Endothelial cell of umbilical vein (primary cell): ENCODE measurements at regions of chr11 and their contacts with region 1.

Region 1: DNA sequence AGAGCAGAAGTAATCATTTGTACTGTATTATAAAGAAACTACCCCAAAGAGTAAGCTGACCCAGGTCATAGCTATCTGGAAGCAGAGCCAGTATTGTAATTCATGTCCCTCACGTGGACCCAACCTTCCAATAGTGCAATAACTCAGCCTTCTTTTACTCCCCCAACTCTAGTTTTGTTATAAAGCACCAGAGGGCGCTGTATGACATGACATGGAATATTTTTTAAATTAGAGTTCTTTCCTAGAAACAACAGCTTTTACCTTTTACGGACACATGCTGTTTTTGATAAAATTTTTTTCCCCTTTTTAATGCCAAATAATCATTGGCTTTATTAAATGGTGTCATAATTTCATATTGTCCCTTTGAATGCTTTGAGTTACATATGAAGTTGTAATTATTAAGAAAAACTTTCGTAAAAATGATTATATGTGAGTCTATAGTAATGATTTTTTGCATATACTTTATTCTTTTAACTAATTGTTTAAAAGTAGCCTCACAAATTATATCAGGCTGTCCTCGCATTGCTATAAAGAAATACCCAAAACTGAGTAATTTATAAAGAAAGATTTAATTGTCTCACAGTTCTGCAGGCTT is 76.9 kb downstream of the DKK3 start:
- DNase-seq: peak; percentile 79
- H3K4me3 ChIP-seq: no peak overlapping the region
- H3K27ac ChIP-seq: no peak overlapping the region
- H3K4me1 ChIP-seq: peaks cover 6% of the 10 kb centered on the region
- H3K27me3 ChIP-seq: no peaks in the 10 kb centered on the region
- CTCF ChIP-seq: peak; percentile 32 to 51
- POLR2A ChIP-seq: no peak

Region 2: DNA sequence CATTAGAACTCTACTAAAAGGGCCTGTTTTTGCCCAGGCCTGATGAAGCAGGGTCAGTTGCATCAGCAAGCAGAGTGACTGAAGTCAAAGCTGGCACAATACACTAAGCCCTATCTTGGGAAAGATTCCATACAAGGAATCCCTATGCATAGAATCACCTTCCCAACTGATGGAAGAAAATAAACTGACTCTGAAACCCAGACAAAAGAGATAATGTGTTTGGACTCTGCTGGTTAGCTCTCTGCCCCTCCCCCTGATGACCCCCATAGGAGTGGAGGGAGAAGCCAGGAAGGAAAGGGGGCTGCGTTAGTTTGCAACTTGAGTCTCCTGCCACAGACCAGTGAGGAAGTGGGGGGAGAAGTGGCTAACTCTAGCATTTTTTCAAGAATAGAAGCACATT is 342.7 kb before region 1 on chr11:
- CTCF ChIA-PET with region 1: no interaction called
- POLR2A ChIA-PET with region 1: no interaction called
- dilution Hi-C with region 1: no loop called
- intact Hi-C with region 1: no loop called
- DNase-seq: no peak
- H3K4me3 ChIP-seq: no peak overlapping the region
- H3K27ac ChIP-seq: no peak overlapping the region
- H3K4me1 ChIP-seq: no peaks in the 10 kb centered on the region
- H3K27me3 ChIP-seq: peaks cover 0 to 2% of the 10 kb centered on the region in 2 experiments
- CTCF ChIP-seq: no peak
- POLR2A ChIP-seq: no peak

Region 3: GRCh38 chr11:11916981-11917399 is 14.6 kb before region 1 on chr11:
- CTCF ChIA-PET with region 1: interaction called, 12 read pairs
- POLR2A ChIA-PET with region 1: no interaction called
- dilution Hi-C with region 1: no loop called
- intact Hi-C with region 1: no loop called
- DNase-seq: no peak
- H3K4me3 ChIP-seq: no peak overlapping the region
- H3K27ac ChIP-seq: no peak overlapping the region
- H3K4me1 ChIP-seq: no peaks in the 10 kb centered on the region
- H3K27me3 ChIP-seq: no peaks in the 10 kb centered on the region
- CTCF ChIP-seq: no peak
- POLR2A ChIP-seq: no peak

Region 4: DNA sequence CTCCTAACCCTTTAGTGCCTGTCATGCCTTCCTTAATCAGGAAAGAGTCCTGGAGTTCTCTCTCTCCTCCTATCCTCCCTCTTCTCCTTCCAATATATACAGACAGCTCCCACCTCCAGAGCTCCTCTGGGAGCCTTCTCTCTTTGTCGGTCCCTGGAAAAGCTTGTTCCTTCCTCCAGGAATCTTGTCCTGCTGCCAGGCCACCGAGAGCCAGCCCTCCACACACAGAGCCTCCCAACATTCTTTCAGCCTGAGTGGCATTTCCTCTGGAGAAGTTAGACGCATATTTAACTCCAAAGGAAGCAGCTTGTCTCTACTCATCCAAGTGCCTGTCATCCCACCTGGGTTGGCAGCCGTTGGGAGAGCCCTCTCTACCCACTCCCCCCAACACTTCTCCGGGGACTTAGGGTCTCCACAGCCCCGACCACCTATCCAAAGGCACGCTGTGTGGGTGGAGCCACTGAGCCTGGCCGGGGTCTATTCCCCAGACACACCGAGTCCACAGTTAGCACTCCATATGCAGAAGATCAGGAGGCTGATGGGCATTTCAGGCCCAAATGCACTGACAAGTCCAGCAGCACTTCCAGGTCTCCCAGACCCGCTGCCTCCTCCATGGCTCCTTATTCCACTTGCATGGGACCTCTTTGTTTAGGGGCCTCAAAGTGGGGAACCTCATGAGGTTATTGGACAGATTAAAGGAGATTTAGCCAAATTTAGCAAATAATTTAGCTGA is 45.8 kb after region 1 on chr11:
- CTCF ChIA-PET with region 1: interaction called, 17 read pairs
- POLR2A ChIA-PET with region 1: no interaction called
- dilution Hi-C with region 1: no loop called
- intact Hi-C with region 1: no loop called
- DNase-seq: peak; percentile 95
- H3K4me3 ChIP-seq: no peak overlapping the region
- H3K27ac ChIP-seq: peak overlapping the region; percentile 95
- H3K4me1 ChIP-seq: peaks cover 55% of the 10 kb centered on the region
- H3K27me3 ChIP-seq: no peaks in the 10 kb centered on the region
- CTCF ChIP-seq: no peak
- POLR2A ChIP-seq: peak; percentile 51

Region 5: DNA sequence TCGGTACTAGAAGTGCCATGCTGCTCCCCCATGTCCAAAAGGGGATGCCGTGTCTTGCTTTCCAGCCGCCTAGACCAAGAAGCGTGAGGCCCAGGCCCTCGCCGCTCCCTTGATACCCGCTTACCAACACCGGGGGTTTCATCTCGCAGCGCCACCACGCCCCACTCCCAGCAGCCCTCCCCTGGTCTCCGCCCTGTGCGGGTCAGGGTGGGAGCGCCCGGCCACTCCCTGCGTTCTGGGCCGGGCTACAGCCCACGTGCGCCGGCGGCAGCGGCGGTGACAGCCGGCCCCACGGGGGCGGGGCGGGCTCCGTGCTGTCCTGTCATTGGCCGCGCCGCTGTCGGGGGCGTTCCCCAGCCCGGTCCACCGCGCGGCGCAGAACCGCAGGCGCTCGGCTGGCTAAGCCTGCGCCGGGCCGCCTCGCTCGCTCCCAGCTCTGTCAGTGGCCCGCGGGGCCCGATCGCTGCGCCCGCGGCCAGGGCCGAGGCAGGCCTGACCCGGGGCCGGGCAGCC is 178.7 kb after region 1 on chr11 and contains the start of gene MICAL2:
- CTCF ChIA-PET with region 1: interaction called, 3 read pairs
- POLR2A ChIA-PET with region 1: no interaction called
- dilution Hi-C with region 1: no loop called
- intact Hi-C with region 1: loop called (anchors 1 kb)
- DNase-seq: peak; percentile 87
- H3K4me3 ChIP-seq: peak within 1 kb of the TSS; percentile 50 to 86 (median 73)
- H3K27ac ChIP-seq: peak within 1 kb of the TSS; percentile 56
- H3K4me1 ChIP-seq: peaks cover 40% of the 10 kb centered on the region
- H3K27me3 ChIP-seq: no peaks in the 10 kb centered on the region
- CTCF ChIP-seq: no peak
- POLR2A ChIP-seq: peak; percentile 85
- total RNA-seq, gene MICAL2: 200 and 222 TPM in 2 replicates